T-cell (primary cell): ENCODE measurements at regions of chr13 and their contacts with region 1.

Region 1: GRCh38 chr13:27826379-27827353 is 34.4 kb downstream of the GSX1 start:
- DNase-seq: peak; percentile 1 to 79 (median 52)
- ATAC-seq: peak; percentile 63 to 72 (median 64)
- H3K4me3 ChIP-seq: no peak overlapping the region
- H3K4me3 Mint-ChIP-seq: no peak overlapping the region
- H3K27ac ChIP-seq: no peak overlapping the region
- H3K27ac Mint-ChIP-seq: peak overlapping the region in 1 of 2 donors; percentile 27
- H3K4me1 ChIP-seq: peaks cover 0 to 12% of the 10 kb centered on the region in 2 experiments
- H3K4me1 Mint-ChIP-seq: peaks cover 6 to 11% (median 6%) of the 10 kb centered on the region in 3 donors
- H3K27me3 ChIP-seq: peaks cover 28 to 56% of the 10 kb centered on the region in 2 experiments
- H3K27me3 Mint-ChIP-seq: peaks cover 64 to 76% of the 10 kb centered on the region in 2 donors

Region 2: GRCh38 chr13:27362064-27362883 is 464.4 kb before region 1 on chr13:
- CTCF ChIA-PET with region 1: interaction called, 22 to 36 read pairs
- POLR2A ChIA-PET with region 1: no interaction called
- DNase-seq: peak; percentile 37 to 86 (median 66)
- ATAC-seq: peak; percentile 91 to 95 (median 94)
- H3K4me3 ChIP-seq: peak overlapping the region; percentile 29 to 35
- H3K4me3 Mint-ChIP-seq: peak overlapping the region; percentile 17 to 49 (median 41)
- H3K27ac ChIP-seq: no peak overlapping the region
- H3K27ac Mint-ChIP-seq: no peak overlapping the region
- H3K4me1 ChIP-seq: peaks cover 0 to 13% of the 10 kb centered on the region in 2 experiments
- H3K4me1 Mint-ChIP-seq: peaks cover 0 to 5% (median 4%) of the 10 kb centered on the region in 3 donors
- H3K27me3 ChIP-seq: peaks cover 0 to 48% of the 10 kb centered on the region in 2 experiments
- H3K27me3 Mint-ChIP-seq: peaks cover 24 to 51% of the 10 kb centered on the region in 2 donors

Region 3: DNA sequence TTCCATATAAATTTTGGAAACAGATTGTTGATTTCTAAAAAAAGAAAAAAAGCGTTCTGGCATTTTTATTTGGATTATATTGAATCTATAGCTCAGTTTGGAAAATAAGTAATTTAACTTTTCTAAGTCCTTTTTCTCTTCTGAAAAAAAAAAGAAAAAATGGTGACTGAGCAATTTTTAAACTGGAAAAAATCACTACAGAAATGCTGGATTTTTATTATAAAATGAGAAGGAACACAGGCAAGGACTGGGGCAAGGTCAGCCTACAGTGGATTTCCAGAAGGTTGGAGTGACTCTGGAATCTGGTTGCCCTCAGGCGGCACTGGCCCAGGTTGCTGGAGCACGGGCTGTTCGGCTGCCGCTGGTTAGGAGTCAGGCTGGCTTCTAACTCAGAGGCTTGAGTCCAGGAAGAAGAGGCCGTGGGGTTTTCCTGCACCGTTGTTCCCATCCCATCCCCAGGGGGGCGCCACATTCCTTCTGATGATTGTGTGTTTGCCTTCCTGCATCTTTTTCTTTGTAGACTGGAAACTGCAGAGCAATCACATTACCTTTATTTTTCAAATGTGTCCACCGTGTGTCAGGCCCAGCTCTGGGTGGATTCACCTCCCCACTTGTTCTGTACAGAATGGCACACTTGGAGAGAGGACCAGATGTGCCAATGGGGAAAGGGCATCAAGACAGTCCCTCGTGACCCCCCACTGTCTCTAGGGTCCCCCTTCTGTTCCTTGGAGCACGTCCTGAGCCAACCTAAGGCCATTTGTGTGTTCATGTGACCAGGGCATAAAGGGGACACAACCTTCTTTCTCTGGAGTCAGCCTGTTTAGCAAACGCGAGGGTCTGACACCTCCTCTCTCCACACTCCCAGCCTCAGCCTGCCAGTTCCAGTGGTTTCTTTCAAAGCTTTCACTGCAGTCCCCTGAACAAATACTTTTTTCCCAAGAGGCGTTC is 446.7 kb before region 1 on chr13:
- CTCF ChIA-PET with region 1: interaction called, 12 to 61 read pairs
- POLR2A ChIA-PET with region 1: no interaction called
- DNase-seq: peak in 33 of 35 experiments; percentile 9 to 66 (median 42)
- ATAC-seq: peak; percentile 34 to 57 (median 44)
- H3K4me3 ChIP-seq: no peak overlapping the region
- H3K4me3 Mint-ChIP-seq: no peak overlapping the region
- H3K27ac ChIP-seq: no peak overlapping the region
- H3K27ac Mint-ChIP-seq: no peak overlapping the region
- H3K4me1 ChIP-seq: no peaks in the 10 kb centered on the region
- H3K4me1 Mint-ChIP-seq: peaks cover 0 to 7% (median 4%) of the 10 kb centered on the region in 3 donors
- H3K27me3 ChIP-seq: peaks cover 0 to 21% of the 10 kb centered on the region in 2 experiments
- H3K27me3 Mint-ChIP-seq: peaks cover 4 to 17% of the 10 kb centered on the region in 2 donors

Region 4: GRCh38 chr13:27704681-27705080 is 122.0 kb before region 1 on chr13:
- CTCF ChIA-PET with region 1: no interaction called
- POLR2A ChIA-PET with region 1: no interaction called
- DNase-seq: peak in 1 of 35 experiments; percentile 21
- ATAC-seq: peak in 1 of 4 experiments; percentile 43
- H3K4me3 ChIP-seq: no peak overlapping the region
- H3K4me3 Mint-ChIP-seq: no peak overlapping the region
- H3K27ac ChIP-seq: no peak overlapping the region
- H3K27ac Mint-ChIP-seq: no peak overlapping the region
- H3K4me1 ChIP-seq: no peaks in the 10 kb centered on the region
- H3K4me1 Mint-ChIP-seq: peaks cover 0 to 5% (median 4%) of the 10 kb centered on the region in 3 donors
- H3K27me3 ChIP-seq: peaks cover 0 to 9% of the 10 kb centered on the region in 2 experiments
- H3K27me3 Mint-ChIP-seq: peaks cover 17 to 34% of the 10 kb centered on the region in 2 donors

Region 5: DNA sequence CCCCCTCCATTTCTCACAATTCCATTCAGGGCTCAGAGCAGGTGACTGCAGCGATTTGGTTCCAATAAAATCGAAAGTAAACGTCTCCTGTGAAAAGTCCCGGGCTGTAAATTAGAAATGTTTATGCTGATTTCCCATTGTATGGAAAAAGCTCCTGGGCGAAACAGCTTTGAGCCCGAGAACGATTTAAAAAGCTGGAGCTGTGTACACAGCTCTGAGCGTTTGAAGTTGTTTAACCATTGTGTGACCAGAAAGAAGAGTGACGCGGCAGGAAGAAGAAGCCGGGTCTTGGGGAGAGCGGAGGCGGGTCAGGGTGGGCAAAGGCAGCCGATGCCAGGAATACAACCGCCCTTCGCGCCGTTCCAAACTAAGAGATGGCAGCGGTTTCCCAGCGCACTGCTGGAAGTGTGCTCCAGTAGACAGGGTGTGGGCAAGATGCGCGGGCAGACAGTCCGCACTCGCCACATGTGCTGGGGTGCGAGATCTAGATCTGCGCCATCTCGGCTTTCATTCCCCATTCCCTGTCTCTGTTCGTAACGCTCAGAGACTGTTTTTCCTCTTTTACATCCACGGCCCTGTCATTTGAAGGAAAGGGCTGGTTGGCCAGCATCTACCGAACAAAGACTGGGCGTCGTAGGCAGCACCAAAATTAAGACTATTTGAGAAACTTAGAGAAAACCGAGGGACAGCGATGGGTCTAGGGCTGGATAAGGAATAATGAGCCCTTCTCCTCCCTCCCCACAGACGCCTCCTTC is 35.3 kb before region 1 on chr13:
- CTCF ChIA-PET with region 1: interaction called, 3 to 10 read pairs
- POLR2A ChIA-PET with region 1: no interaction called
- DNase-seq: no peak
- ATAC-seq: no peak
- H3K4me3 ChIP-seq: peak overlapping the region; percentile 43 to 51
- H3K4me3 Mint-ChIP-seq: peak overlapping the region; percentile 80 to 86 (median 81)
- H3K27ac ChIP-seq: no peak overlapping the region
- H3K27ac Mint-ChIP-seq: no peak overlapping the region
- H3K4me1 ChIP-seq: peaks cover 3 to 47% of the 10 kb centered on the region in 2 experiments
- H3K4me1 Mint-ChIP-seq: peaks cover 39 to 46% (median 43%) of the 10 kb centered on the region in 3 donors
- H3K27me3 ChIP-seq: peaks cover 15 to 74% of the 10 kb centered on the region in 2 experiments
- H3K27me3 Mint-ChIP-seq: peaks cover 73 to 82% of the 10 kb centered on the region in 2 donors

Region 6: DNA sequence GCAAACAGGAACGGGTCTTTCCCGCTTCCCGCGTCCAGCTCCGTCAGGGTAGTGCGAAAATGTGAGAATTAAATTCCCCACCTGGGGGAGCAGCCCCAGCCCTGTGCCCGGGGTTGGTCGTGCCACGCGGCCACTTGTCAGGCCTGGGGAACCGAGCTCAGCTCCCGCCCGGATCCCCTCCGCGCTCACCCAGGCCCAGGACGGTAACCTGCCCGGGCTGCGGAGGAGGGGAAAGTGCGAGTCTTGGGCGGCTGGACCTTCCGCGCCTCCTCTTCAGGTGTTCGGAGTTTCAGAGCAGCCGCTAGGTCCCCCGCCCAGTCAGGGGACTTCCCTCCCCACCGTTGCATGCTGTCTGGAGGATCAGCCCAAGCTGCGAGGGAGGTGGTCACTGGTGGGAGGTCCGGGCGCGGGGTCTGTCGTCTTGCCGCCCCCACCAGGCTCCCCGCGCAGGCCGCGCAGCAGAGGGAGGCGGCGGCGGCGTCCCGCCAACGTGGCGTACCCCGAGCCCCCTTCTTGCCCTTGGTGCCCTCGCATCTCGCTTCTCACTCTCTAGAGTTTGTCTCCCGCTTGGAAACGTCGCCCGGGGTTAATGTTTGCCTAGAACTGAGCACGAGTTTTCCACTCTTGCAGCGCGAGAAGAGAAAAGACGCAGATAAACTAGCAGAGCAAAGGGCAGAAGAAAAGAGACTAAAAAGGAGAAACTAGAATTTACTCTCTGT is 153.8 kb after region 1 on chr13:
- CTCF ChIA-PET with region 1: interaction called, 14 to 51 read pairs
- POLR2A ChIA-PET with region 1: no interaction called
- DNase-seq: no peak
- ATAC-seq: no peak
- H3K4me3 ChIP-seq: no peak overlapping the region
- H3K4me3 Mint-ChIP-seq: peak overlapping the region in 1 of 3 donors; percentile 25
- H3K27ac ChIP-seq: no peak overlapping the region
- H3K27ac Mint-ChIP-seq: no peak overlapping the region
- H3K4me1 ChIP-seq: peaks cover 0 to 24% of the 10 kb centered on the region in 2 experiments
- H3K4me1 Mint-ChIP-seq: peaks cover 13 to 30% (median 27%) of the 10 kb centered on the region in 3 donors
- H3K27me3 ChIP-seq: peaks cover 33 to 72% of the 10 kb centered on the region in 2 experiments
- H3K27me3 Mint-ChIP-seq: peaks cover 67 to 76% of the 10 kb centered on the region in 2 donors